ENCODE measurements at regions of chr14 and their contacts with region 1.

Region 1: GRCh38 chr14:80996049-80996901 is 40.9 kb downstream of the TSHR start:
- DNase-seq: no peak
- ATAC-seq: peak; percentile 94

Region 2: GRCh38 chr14:81157431-81157830 is 161.2 kb after region 1 on chr14:
- intact Hi-C with region 1: no loop called
- DNase-seq: no peak
- ATAC-seq: no peak

Region 3: DNA sequence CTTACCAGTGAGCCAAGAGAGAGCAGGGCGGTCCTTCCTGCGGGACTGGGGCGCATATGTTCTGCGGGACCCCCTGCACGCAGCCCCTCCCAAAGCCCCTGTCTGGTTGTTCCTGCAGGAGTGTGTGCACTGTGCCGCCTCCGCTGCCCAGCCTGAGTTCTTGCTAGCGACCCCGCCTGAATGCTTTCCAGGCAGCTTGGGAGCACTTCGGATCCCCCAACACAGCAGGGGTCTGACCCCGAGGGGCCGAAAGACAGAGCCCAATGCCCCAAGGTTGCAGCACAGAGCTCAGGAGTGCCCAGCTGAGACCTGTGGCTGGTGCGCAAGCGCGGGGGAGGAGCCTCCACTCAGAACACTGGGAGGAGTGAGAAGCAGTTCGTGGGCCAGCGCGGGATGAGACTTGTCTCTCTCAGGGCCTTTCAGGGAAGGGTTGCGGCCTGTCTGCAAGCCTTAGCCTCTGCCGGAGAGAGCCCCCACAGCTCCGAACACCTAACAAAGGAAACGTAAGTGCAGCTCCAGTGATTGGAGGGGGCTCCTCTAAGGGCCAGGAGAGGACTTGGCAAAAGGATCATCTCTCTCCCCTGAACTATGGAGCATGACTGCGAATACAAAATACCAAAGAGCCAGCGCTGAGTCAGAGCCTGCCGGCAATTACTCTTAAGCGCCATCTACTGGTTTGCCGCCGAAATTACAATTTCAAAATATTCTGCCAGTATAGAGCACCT is 174.0 kb after region 1 on chr14:
- intact Hi-C with region 1: loop called (anchors 1 kb)
- DNase-seq: peak; percentile 98
- ATAC-seq: peak; percentile 100

Region 4: GRCh38 chr14:81211844-81212243 is 215.6 kb after region 1 on chr14:
- intact Hi-C with region 1: loop called (anchors 1 kb)
- DNase-seq: no peak
- ATAC-seq: peak; percentile 83

Measured in Right ventricle myocardium inferior (tissue), 1 donor.